Endothelial cell of umbilical vein (primary cell): ENCODE measurements at regions of chr4 and their contacts with region 1.

Region 1: DNA sequence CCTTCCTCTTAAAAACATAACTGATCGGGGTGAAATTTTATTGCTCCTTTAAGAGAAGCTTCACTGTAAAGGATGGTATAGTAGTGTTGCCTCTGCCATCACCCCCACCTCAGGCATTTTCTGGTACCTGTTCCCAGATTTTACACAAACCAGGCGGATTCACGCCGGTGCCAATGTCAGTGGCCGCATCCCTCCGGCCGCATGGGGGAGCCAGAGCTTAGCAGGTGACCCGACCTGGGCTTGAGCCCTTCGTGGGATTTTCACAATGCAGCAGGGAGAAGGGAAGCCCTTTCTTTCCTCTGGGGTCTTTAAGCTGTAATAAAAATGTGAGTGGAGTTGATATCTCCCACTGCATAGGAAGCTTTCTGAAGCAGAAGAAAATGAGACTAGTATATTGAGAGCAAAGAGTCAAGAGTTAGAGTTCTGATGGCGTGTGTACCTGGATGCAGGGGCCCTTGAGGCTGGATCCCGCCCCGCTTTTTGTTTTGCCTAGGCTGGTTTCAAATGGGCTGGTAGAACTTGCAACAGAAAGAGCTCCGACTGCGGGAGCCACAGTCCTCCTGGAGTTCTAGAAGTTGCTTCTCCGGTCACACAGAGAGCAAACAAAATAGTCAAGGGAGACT is 59.4 kb downstream of the POLR2B start:
- DNase-seq: peak; percentile 59
- H3K4me3 ChIP-seq: no peak overlapping the region
- H3K27ac ChIP-seq: no peak overlapping the region
- H3K4me1 ChIP-seq: peaks cover 9% of the 10 kb centered on the region
- H3K27me3 ChIP-seq: no peaks in the 10 kb centered on the region
- CTCF ChIP-seq: peak; percentile 88 to 90
- POLR2A ChIP-seq: no peak

Region 2: DNA sequence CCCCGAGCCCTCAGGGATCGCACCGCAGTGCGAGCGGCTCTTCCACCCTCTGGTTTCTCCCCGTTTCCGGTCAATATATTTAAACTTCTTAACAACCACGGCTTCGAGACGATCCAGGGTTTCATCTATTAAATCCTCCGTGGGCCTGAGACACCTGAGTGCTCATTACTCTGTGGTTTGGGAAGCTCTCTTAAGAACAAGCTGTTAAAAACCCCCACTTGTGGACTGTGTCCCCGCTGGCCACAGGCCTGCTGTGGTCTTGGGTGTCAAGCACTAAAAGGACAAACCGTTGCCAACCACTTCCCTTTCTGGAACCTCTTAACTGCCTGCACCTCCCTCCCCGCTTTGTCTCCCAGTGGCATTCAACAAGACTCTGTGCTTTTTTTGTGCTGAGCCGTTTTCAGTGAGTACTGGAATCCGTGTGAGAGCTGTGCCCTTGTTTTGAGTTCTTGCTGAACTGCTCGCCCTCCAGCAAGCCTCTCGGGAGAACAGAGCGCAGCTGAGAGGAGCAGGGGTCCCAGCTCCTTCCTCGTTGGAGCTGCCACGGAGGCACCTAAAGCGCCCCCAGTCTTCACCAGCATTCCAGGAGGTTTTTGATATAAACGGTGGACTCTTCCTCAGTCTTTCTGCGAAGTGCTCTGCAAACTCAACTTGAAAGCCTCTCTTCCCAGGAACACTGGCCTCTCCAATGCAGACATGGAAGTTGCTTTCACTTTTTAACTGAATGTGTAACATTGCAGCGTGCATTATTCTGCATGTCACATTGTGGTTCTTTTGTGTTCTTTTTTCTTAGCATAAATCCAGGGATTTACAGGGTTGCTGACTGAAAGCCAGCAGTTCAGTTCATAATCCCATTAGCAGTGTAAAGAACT is 72.8 kb after region 1 on chr4:
- CTCF ChIA-PET with region 1: interaction called, 4 read pairs
- POLR2A ChIA-PET with region 1: no interaction called
- dilution Hi-C with region 1: no loop called
- intact Hi-C with region 1: loop called (anchors 1 kb)
- DNase-seq: peak; percentile 82
- H3K4me3 ChIP-seq: peak overlapping the region; percentile 20 to 85 (median 52)
- H3K27ac ChIP-seq: peak overlapping the region; percentile 54
- H3K4me1 ChIP-seq: peaks cover 21% of the 10 kb centered on the region
- H3K27me3 ChIP-seq: no peaks in the 10 kb centered on the region
- CTCF ChIP-seq: no peak
- POLR2A ChIP-seq: no peak

Region 3: GRCh38 chr4:57158221-57158620 is 120.1 kb after region 1 on chr4:
- CTCF ChIA-PET with region 1: interaction called, 67 read pairs
- POLR2A ChIA-PET with region 1: interaction called, 3 read pairs
- dilution Hi-C with region 1: no loop called
- intact Hi-C with region 1: loop called (anchors 1 kb)
- DNase-seq: no peak
- H3K4me3 ChIP-seq: no peak overlapping the region
- H3K27ac ChIP-seq: no peak overlapping the region
- H3K4me1 ChIP-seq: peaks cover 9% of the 10 kb centered on the region
- H3K27me3 ChIP-seq: no peaks in the 10 kb centered on the region
- CTCF ChIP-seq: no peak
- POLR2A ChIP-seq: no peak

Region 4: GRCh38 chr4:57200928-57201327 is 162.8 kb after region 1 on chr4:
- CTCF ChIA-PET with region 1: no interaction called
- POLR2A ChIA-PET with region 1: no interaction called
- dilution Hi-C with region 1: no loop called
- intact Hi-C with region 1: no loop called
- DNase-seq: no peak
- H3K4me3 ChIP-seq: no peak overlapping the region
- H3K27ac ChIP-seq: no peak overlapping the region
- H3K4me1 ChIP-seq: no peaks in the 10 kb centered on the region
- H3K27me3 ChIP-seq: peaks cover 8 to 13% of the 10 kb centered on the region in 2 experiments
- CTCF ChIP-seq: no peak
- POLR2A ChIP-seq: no peak

Region 5: GRCh38 chr4:57220172-57220571 is 182.1 kb after region 1 on chr4:
- CTCF ChIA-PET with region 1: no interaction called
- POLR2A ChIA-PET with region 1: no interaction called
- dilution Hi-C with region 1: no loop called
- intact Hi-C with region 1: no loop called
- DNase-seq: no peak
- H3K4me3 ChIP-seq: no peak overlapping the region
- H3K27ac ChIP-seq: no peak overlapping the region
- H3K4me1 ChIP-seq: no peaks in the 10 kb centered on the region
- H3K27me3 ChIP-seq: peaks cover 0 to 3% of the 10 kb centered on the region in 2 experiments
- CTCF ChIP-seq: no peak
- POLR2A ChIP-seq: no peak